ENCODE measurements at regions of chr16 and their contacts with region 1.

Region 1: DNA sequence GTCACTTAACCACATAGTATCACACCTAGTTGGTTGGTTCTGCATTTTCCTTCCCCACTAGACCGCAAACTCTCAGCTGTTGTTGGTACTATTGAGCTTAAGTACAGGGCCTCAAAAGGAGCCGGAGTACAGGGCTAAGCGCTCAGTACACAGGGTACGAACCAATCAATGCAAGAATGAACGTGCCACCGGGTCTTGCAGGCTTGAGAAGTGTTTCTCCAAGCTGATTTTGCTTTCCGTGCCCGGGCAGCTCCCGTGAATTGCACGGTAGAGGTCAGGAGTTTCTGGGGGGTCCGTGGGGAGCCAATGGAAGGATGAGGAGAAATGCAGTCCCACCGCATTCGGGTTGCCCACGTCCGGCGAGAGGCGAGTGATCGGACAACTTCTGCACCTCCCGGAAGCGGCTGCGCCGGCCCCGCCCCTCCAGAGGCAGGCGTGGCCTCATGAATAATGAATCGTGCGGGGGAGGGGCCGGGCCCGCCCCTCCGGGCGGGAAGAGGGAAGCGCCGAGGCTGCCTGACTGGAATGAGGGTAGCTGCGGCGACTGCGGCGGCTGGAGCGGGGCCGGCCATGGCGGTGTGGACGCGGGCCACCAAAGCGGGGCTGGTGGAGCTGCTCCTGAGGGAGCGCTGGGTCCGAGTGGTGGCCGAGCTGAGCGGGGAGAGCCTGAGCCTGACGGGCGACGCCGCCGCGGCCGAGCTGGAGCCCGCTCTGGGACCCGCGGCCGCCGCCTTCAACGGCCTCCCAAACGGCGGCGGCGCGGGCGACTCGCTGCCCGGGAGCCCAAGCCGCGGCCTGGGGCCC is at the start of gene SNTB2:
- DNase-seq: peak; percentile 83
- H3K4me3 Mint-ChIP-seq: peak within 1 kb of the TSS; percentile 95
- H3K27ac Mint-ChIP-seq: peak within 1 kb of the TSS; percentile 97
- H3K4me1 Mint-ChIP-seq: peaks cover 57% of the 10 kb centered on the region
- H3K27me3 Mint-ChIP-seq: no peaks in the 10 kb centered on the region
- total RNA-seq, gene SNTB2: 27.9 and 29.4 TPM in 2 replicates

Region 2: DNA sequence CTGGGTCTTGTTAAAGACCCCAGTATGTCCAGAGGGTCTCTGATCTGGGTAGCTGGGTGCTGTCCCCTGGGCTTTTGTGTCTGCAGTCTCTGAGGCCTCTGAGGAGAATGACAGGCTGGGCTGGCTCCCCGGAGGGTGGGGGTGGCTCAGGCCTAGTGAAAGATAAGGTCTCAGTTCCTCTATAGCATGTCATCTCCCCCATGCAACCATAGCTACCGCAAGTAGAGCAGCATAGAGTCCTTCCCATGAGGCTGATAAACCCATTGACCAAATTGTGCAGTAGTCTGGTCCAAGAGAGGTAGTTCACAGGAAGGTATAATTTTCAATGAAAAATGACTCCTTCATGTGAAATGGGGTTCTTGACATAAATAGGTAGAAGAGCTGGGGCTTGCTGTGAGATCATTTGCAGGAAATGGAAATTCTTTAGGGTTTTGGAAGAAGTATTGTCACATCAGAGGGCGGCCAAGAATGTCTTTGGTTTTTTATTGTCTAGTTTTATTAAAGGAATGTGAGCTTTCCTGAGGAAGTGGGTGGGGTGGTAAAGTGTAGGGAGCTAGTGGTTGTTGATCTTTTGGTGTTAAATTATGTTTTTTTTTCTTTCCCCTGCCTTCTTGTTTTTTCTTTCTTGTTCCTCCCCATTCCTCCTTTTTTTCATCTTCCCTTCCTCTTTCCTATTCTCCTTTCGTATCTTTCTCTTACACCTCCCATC is 897.1 kb before region 1 on chr16:
- intact Hi-C with region 1: loop called (anchors 10 kb)
- DNase-seq: peak; percentile 40
- H3K4me3 Mint-ChIP-seq: peak overlapping the region; percentile 67
- H3K27ac Mint-ChIP-seq: peak overlapping the region; percentile 97
- H3K4me1 Mint-ChIP-seq: peaks cover 92% of the 10 kb centered on the region
- H3K27me3 Mint-ChIP-seq: no peaks in the 10 kb centered on the region

Region 3: GRCh38 chr16:68936736-68937631 is 249.9 kb before region 1 on chr16:
- intact Hi-C with region 1: no loop called
- DNase-seq: no peak
- H3K4me3 Mint-ChIP-seq: no peak overlapping the region
- H3K27ac Mint-ChIP-seq: no peak overlapping the region
- H3K4me1 Mint-ChIP-seq: no peaks in the 10 kb centered on the region
- H3K27me3 Mint-ChIP-seq: no peaks in the 10 kb centered on the region

Region 4: GRCh38 chr16:69132424-69133252 is 54.2 kb before region 1 on chr16 and contains the starts of genes CHTF8 and UTP4:
- intact Hi-C with region 1: loop called (anchors 1 kb)
- DNase-seq: peak; percentile 88
- H3K4me3 Mint-ChIP-seq: peak within 1 kb of the TSS; percentile 97
- H3K27ac Mint-ChIP-seq: peak within 1 kb of the TSS; percentile 92
- H3K4me1 Mint-ChIP-seq: peaks cover 49% of the 10 kb centered on the region
- H3K27me3 Mint-ChIP-seq: no peaks in the 10 kb centered on the region
- total RNA-seq, gene CHTF8: 134 and 143 TPM in 2 replicates
- total RNA-seq, gene UTP4: 117 and 127 TPM in 2 replicates

Region 5: GRCh38 chr16:69166221-69166833 is 20.5 kb before region 1 on chr16:
- intact Hi-C with region 1: loop called (anchors 1 kb)
- DNase-seq: peak; percentile 46
- H3K4me3 Mint-ChIP-seq: peak overlapping the region; percentile 69
- H3K27ac Mint-ChIP-seq: peak overlapping the region; percentile 89
- H3K4me1 Mint-ChIP-seq: peaks cover 49% of the 10 kb centered on the region
- H3K27me3 Mint-ChIP-seq: no peaks in the 10 kb centered on the region

Region 6: DNA sequence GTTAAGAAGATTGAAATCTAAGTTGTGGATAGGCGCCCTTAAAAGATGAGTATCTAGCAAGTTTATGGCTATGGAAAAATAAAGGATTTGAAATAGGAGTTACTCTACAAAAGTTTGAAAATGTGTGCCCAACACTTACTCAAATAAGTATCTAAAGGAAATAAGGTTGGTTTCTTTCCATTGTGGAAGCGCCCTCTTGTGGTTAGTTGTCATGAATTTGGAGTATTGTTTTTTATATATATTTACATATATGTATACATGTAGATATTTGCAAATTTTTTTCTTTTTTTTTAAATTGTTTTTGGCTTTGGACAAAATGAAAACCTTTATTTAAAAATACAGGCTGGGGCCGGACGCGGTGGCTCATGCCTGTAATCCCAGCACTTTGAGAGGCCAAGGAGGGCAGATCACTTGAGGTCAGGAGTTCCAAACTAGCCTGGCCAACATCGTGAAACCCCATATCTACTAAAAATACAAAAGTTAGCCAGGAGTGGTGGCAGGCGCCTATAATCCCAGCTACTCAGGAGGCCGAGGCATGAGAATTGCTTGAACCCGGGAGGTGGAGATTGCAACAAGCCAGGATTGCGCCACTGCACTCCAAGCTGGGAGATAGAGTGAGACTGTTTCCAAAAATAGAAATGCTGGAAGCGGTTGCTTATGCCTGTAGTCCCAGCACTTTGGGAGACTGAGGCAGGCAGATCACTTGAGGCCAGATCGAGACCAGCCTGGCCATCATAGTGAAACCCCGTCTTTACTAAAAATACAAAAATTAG is 100.3 kb after region 1 on chr16:
- intact Hi-C with region 1: loop called (anchors 1 kb)
- DNase-seq: peak; percentile 12
- H3K4me3 Mint-ChIP-seq: no peak overlapping the region
- H3K27ac Mint-ChIP-seq: no peak overlapping the region
- H3K4me1 Mint-ChIP-seq: peaks cover 5% of the 10 kb centered on the region
- H3K27me3 Mint-ChIP-seq: no peaks in the 10 kb centered on the region

Region 7: DNA sequence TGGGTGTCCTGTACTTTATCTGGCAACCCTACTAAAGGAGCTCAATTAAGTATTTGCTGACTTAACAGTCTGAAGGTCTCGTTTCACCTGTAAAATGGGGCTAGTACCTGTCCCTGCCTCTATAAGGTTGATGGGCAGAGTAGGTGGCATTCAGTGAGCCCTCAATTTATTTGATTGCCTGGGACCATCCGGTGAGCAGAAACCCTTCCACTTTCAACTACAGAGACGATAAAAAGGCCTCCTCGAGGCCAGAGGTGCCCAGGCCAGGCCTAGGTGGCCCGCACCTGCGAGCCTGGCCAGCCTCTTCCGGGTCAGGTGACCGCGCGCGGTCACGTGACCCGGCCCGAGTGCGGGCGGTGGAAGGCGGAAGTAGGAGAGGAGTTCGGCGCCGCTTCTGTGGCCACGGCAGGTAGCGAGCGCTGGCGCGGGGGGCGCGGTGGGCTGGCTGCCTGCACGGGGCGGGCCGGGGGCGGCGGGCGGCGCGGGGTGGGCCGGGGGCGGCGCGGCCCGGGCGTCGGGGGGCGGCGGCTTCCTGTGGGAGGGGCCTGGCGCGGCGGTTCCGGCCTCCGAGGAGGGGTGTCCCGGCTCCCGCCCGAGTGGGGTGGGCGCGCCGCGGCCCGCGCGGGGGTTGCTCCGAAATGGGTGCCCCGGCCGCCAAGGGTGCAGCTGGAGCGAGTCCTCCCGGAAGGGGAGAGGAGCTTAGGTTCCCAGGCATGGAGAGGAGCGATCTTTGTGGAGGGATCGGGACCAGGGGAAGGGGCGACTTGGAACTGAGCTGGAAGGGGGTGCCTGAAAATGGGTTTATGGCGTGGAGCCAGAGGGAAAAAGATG is 575.4 kb after region 1 on chr16 and contains the start of gene WWP2:
- intact Hi-C with region 1: loop called (anchors 5 kb)
- DNase-seq: peak; percentile 63
- H3K4me3 Mint-ChIP-seq: peak within 1 kb of the TSS; percentile 95
- H3K27ac Mint-ChIP-seq: peak within 1 kb of the TSS; percentile 96
- H3K4me1 Mint-ChIP-seq: peaks cover 31% of the 10 kb centered on the region
- H3K27me3 Mint-ChIP-seq: peaks cover 2% of the 10 kb centered on the region
- total RNA-seq, gene WWP2: 53.8 and 58.3 TPM in 2 replicates